ENCODE measurements at regions of chr9 and their contacts with region 1.

Region 1: GRCh38 chr9:108259917-108260675 is 595.7 kb downstream of the ACTL7B start:
- DNase-seq: no peak
- CTCF ChIP-seq: no peak

Region 2: GRCh38 chr9:107548048-107548800 is 711.9 kb before region 1 on chr9:
- CTCF ChIA-PET with region 1: no interaction called
- POLR2A ChIA-PET with region 1: no interaction called
- DNase-seq: no peak
- CTCF ChIP-seq: no peak

Region 3: GRCh38 chr9:108272349-108272899 is 12.3 kb after region 1 on chr9:
- CTCF ChIA-PET with region 1: interaction called, 16 read pairs
- POLR2A ChIA-PET with region 1: no interaction called
- DNase-seq: peak; percentile 24
- CTCF ChIP-seq: no peak

Region 4: GRCh38 chr9:108282872-108283271 is 22.8 kb after region 1 on chr9:
- CTCF ChIA-PET with region 1: no interaction called
- POLR2A ChIA-PET with region 1: no interaction called
- DNase-seq: no peak
- CTCF ChIP-seq: no peak